PC-3 (cell line): ENCODE measurements at regions of chr4 and their contacts with region 1.

Region 1: GRCh38 chr4:60313611-60314178 is 886.4 kb upstream of the ADGRL3 start:
- DNase-seq: no peak
- ATAC-seq: peak; percentile 3; the same call in 1 of the 2 replicates
- H3K4me3 ChIP-seq: no peak overlapping the region
- H3K27ac ChIP-seq: peak overlapping the region; percentile 66
- H3K4me1 ChIP-seq: peaks cover 19% of the 10 kb centered on the region
- H3K27me3 ChIP-seq: no peaks in the 10 kb centered on the region
- CTCF ChIP-seq: no peak

Region 2: DNA sequence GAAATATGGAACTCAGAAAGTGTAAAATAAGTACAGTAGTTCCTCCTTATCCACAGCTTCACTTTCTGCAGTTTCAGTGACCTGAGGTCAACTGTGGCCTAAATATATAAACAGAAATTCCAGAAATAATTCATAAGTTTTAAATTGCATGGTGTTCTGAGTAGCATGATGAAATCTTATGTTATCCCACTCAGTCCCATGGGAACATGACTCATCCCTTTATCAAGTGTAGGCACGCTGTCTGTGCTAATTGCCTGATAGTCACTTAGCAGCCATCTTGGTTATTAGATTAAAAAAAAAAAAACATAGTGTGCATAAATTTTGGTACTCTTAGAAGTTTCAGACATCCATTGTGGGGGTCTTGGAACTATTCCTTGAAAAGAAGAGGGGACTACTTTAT is 96.9 kb before region 1 on chr4:
- CTCF ChIA-PET with region 1: no interaction called
- POLR2A ChIA-PET with region 1: no interaction called
- intact Hi-C with region 1: loop called (anchors 10 kb)
- DNase-seq: no peak
- ATAC-seq: no peak
- H3K4me3 ChIP-seq: no peak overlapping the region
- H3K27ac ChIP-seq: no peak overlapping the region
- H3K4me1 ChIP-seq: no peaks in the 10 kb centered on the region
- H3K27me3 ChIP-seq: no peaks in the 10 kb centered on the region
- CTCF ChIP-seq: no peak

Region 3: GRCh38 chr4:60384516-60384915 is 70.8 kb after region 1 on chr4:
- CTCF ChIA-PET with region 1: no interaction called
- POLR2A ChIA-PET with region 1: no interaction called
- intact Hi-C with region 1: loop called (anchors 5 kb)
- DNase-seq: no peak
- ATAC-seq: no peak
- H3K4me3 ChIP-seq: no peak overlapping the region
- H3K27ac ChIP-seq: no peak overlapping the region
- H3K4me1 ChIP-seq: no peaks in the 10 kb centered on the region
- H3K27me3 ChIP-seq: no peaks in the 10 kb centered on the region
- CTCF ChIP-seq: no peak

Region 4: GRCh38 chr4:60463857-60464502 is 150.3 kb after region 1 on chr4:
- CTCF ChIA-PET with region 1: interaction called, 3 read pairs
- POLR2A ChIA-PET with region 1: no interaction called
- intact Hi-C with region 1: loop called (anchors 1 kb)
- DNase-seq: peak; percentile 70
- ATAC-seq: peak; percentile 80
- H3K4me3 ChIP-seq: no peak overlapping the region
- H3K27ac ChIP-seq: no peak overlapping the region
- H3K4me1 ChIP-seq: no peaks in the 10 kb centered on the region
- H3K27me3 ChIP-seq: no peaks in the 10 kb centered on the region
- CTCF ChIP-seq: peak; percentile 81